Spleen (tissue), 13 donors: ENCODE measurements at regions of chr7 and their contacts with region 1.

Region 1: GRCh38 chr7:87797798-87798403 is 78.3 kb downstream of the SLC25A40 start:
- DNase-seq: no peak
- H3K4me3 ChIP-seq: no peak overlapping the region
- H3K27ac ChIP-seq: no peak overlapping the region
- H3K4me1 ChIP-seq: no peaks in the 10 kb centered on the region
- H3K27me3 ChIP-seq: no peaks in the 10 kb centered on the region
- CTCF ChIP-seq: peak in 9 of 11 experiments; percentile 34 to 58 (median 53)
- POLR2A ChIP-seq: no peak

Region 2: DNA sequence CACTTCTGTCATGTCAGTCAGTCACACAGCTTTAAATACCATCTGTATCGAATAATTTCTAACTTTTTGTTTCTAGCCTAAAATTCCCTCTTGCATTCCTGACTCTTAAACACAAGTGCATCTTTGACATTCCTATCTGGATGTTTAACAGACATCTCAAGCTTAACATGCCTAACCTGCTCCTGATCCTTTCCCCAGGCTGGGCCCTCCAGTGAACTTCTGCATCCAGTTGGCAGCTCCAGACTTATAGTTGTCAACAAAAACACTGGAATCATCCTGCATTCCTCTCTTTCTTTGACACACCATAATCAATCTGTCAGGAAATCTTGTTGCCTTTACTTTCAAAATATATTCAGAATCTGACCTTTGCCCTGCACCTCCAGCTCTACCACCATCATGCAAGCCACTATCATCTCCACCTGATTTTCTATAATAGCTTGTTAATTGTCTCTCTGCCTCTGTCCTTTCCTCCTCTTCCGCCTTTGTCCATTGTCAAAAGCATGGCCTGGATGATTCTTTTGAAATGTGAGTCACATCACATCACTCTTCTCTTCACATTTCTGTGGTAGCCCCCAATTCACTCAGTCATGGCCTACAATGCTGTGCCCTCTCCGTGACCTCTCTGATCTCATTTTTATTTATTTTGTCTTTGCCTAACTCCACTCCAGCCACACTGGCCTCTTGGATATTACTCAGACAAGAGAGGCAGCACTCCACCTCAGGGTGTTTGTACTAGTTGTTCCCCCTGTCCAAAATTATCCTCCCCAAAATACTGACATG is 317.7 kb before region 1 on chr7:
- intact Hi-C with region 1: no loop called
- DNase-seq: no peak
- H3K4me3 ChIP-seq: no peak overlapping the region
- H3K27ac ChIP-seq: no peak overlapping the region
- H3K4me1 ChIP-seq: peaks cover 0 to 18% (median 12%) of the 10 kb centered on the region in 6 donors
- H3K27me3 ChIP-seq: peaks cover 0 to 15% (median 11%) of the 10 kb centered on the region in 7 donors
- CTCF ChIP-seq: no peak
- POLR2A ChIP-seq: no peak

Region 3: GRCh38 chr7:87658553-87658952 is 139.3 kb before region 1 on chr7:
- intact Hi-C with region 1: no loop called
- DNase-seq: no peak
- H3K4me3 ChIP-seq: no peak overlapping the region
- H3K27ac ChIP-seq: no peak overlapping the region
- H3K4me1 ChIP-seq: no peaks in the 10 kb centered on the region
- H3K27me3 ChIP-seq: no peaks in the 10 kb centered on the region
- CTCF ChIP-seq: no peak
- POLR2A ChIP-seq: no peak

Region 4: DNA sequence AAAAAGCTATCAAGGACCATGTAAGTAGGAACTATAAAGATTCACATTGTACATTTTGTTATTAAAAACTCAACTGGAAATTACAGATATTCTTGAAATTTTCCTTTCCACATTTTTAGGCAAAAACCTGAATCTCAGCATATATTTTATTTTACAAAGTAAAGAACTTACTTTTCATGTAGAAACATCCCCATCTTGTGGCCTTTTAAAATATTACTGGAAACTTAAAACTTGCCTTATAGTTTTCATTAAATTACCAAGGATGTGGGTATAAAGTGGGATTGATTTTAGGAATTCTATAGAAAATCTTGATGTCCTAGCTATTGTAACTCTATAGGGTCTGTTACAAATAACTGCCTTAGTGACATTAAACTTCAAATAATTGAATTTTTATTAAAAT is 89.0 kb after region 1 on chr7:
- intact Hi-C with region 1: loop called (anchors 5 kb)
- DNase-seq: no peak
- H3K4me3 ChIP-seq: no peak overlapping the region
- H3K27ac ChIP-seq: no peak overlapping the region
- H3K4me1 ChIP-seq: no peaks in the 10 kb centered on the region
- H3K27me3 ChIP-seq: no peaks in the 10 kb centered on the region
- CTCF ChIP-seq: peak in 10 of 11 experiments; percentile 29 to 63 (median 50)
- POLR2A ChIP-seq: no peak

Region 5: DNA sequence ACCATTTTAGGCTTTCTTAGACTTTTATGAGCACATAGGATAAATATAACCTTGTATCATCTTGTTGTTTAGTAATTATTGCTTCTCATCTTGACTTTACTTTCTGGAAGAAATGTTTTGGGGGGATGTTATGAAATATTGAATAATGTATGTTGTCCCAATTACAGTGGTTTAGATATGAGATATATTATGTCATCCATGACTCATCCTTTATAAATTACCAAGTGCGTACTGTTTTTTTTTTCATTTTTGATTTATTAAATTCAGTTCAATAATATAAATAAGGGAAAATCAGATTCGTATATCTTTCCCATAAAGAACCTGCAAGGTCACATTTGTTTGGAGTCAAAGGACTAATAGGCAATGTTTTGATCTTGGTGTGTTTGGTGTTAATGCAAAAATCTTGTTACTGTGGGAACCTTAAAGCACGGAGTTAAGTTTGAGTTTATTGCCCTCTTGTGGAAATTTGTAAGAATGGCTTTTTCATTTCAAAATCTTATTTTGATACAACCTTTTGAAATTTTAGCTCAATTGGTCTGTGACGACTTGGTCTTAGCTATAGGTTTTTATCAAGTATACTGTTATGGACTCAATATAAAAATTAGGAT is 313.3 kb after region 1 on chr7:
- intact Hi-C with region 1: loop called (anchors 5 kb)
- DNase-seq: no peak
- H3K4me3 ChIP-seq: no peak overlapping the region
- H3K27ac ChIP-seq: no peak overlapping the region
- H3K4me1 ChIP-seq: no peaks in the 10 kb centered on the region
- H3K27me3 ChIP-seq: no peaks in the 10 kb centered on the region
- CTCF ChIP-seq: peak in 8 of 11 experiments; percentile 22 to 59 (median 50)
- POLR2A ChIP-seq: no peak